Head of caudate nucleus (tissue), 42 donors: ENCODE measurements at regions of chr12 and their contacts with region 1.

Region 1: DNA sequence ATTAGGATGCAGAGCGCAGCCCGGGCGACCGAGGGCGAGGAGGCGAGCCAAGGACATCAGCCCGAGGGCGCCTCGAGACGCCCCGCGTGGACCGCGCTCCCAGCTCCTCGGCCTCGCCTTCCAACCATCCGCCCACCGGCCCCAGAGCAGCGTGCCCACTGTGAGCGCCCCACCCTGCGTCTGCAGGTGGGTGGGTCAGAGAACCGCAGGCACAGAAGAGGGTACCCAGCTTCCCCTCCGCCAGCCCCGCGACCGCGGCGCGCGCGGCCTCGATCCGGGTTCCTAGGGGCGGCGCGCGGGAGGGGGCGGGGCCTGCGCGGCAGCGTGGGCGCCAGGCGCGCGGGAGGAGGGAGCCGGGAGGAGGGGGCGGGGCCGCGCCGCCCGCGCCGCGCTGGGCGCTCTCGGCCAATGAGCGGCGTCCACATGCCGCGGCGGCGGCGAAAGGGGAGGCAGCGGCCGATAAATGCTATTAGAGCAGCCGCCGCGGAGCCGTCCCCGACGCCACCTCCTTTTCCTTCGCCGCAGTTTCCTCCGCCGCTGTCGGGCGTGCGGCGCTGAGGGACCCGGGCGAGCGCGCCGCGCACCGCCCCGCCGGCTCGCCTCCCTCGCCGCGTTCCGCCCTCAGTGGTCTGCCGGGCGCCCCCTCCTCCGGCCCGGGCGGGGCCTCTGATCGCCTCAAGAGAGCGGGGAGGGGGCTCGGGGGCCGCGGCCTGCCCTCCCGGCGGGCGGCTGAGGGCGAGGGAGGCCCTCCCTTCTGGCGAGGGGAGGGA is at the start of gene ATP2A2:
- DNase-seq: peak; percentile 72 to 95 (median 89)

Region 2: GRCh38 chr12:110124184-110124995 is 156.6 kb before region 1 on chr12 and contains the start of gene IFT81:
- intact Hi-C with region 1: loop called (anchors 5 kb)
- DNase-seq: peak; percentile 85 to 99 (median 97)

Region 3: DNA sequence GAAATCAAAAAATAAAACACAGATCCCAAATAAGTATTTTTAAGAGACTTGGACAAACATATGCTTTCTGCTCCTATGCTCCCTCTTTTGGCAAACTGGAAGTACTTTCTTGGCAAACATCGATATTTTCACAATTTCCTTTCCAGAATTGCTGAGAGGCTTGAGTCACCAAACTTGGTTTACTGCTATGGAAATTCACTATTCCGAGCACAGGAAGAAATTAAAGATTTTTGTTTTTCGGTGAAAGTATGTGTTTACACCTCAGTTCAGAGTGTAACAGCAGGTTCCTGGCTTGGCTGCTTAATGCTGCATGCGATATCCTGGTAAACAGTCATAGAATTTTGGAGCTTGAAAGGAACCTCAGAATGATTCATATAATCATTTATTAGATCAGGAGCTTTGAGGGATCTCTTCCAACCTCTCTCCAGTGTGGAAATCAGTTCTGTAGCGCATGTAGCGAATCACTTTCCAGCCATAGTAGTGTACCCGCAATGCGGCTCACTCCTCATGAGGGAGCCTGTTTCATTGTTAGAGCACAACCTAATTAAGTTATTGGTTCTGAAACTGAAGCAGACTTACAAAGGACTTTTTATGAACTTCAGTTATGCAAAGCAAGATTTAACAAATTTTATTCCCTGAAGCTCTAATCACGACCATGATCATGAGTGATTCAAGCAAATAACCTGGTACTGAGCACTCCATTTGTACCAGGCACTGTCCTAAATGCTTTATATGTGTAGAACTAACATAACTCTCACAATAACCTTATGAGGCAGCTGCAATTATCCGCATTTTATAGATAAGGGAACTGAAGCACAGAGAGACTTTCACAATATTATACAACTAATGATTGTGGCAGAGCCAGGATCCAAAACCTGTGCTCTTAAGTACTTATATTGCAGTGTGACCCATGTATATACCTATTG is 56.3 kb before region 1 on chr12:
- intact Hi-C with region 1: loop called (anchors 2 kb)
- DNase-seq: peak in 25 of 42 donors; percentile 5 to 66 (median 32)

Region 4: DNA sequence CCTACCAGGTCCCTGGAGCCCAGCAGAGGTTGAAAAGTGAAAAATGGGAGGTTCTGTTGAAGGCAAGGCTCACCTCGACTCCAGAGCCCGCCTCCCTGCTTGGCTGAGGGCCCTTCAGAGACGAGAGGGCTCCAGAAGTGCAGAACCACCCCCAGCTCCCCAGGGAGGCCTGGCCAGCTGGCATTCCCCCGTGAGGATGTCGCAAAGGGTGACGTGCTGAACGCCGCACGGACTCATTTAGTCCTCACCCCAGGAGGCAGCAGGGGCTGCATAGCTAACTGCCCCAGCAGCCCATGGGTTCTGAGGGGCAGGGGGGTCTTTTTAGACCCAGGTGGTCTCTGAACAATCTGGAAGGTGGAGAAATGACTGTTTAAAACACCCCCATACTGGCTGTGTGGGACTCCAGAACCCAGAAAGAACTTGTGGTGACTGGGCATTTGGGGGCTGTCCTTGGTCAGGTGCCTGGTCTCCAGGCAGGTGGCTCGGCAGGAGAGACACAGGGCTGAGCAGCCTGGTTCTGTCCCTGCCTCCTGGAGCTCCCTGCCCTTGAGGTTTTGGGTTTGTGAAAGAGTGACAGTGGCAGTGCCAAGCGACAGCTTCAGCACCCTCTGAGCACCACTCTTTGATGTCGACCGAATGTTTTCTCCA is 90.6 kb after region 1 on chr12:
- intact Hi-C with region 1: no loop called
- DNase-seq: no peak

Region 5: DNA sequence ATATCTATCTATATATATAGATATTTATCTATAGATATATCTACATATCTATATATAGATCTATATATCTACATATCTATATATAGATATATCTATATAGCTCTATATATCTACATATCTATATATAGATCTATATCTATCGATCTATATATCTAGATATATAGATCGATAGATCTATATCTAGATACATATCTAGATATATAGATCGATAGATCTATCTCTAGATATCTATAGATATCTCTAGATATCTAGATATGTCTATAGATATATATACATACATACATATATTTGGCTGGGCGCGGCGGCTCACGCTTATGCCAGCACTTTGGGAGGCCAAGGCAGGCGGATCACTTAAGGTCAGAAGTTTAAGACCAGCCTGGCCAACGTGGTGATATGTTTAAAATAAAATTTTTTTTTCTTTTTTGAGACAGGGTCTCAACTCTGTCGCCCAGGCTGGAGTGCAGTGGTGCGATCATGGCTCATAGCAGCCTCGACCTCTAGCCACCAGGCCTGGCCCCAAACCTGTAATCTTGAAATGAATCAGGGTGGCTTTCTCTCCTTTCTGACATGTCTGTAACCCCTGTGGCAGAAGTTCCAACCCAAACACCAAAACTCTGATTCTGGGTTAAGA is 151.1 kb after region 1 on chr12:
- intact Hi-C with region 1: loop called (anchors 10 kb)
- DNase-seq: peak in 1 of 42 donors; percentile 41

Region 6: DNA sequence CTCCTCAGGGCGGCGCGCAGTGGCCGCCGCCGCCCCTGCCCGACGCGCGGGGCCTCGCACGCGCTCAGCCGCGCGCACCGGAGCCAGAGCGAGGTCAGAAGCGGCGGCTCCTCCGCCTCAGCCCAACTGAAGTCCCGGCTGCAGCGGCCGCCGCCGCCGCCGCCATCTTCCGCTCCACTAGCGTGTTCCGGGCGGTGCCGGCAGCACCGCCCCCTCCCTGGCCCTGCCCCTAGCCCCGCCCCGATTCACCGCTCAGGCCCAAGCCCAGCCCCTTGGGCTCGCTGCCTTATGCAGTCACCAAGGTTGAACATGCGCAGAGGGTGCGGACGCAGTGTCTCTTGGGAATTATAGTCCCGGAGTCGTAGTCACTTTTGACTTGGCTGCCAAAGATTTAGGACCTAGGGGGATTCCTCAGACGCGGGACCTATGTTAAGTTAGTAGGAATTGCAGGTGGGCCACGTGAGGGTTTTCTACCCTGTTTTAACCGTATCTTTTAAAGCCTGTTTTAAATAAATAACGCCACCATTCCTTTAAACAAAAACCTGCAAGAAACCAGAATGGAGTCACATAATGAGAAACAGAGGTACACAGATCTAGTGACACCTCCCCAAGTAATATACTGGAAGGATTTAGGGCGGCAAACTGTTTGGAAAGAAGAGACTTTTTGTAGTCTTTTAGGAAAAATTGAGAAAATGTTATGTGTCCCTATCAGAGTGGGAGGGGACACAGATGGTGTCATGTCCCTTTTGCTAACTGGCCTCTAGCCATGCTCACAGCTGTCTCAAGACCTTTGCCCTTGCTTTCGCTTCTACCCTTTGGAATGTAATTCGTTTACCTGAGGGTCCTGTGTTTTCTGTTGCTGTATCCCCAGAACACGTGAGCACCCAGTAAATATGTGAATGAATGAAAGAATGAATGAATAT is 302.4 kb after region 1 on chr12 and contains the start of gene PPTC7:
- intact Hi-C with region 1: no loop called
- DNase-seq: peak; percentile 97 to 99 (median 98)